ENCODE measurements at regions of chr11 and their contacts with region 1.

Region 1: DNA sequence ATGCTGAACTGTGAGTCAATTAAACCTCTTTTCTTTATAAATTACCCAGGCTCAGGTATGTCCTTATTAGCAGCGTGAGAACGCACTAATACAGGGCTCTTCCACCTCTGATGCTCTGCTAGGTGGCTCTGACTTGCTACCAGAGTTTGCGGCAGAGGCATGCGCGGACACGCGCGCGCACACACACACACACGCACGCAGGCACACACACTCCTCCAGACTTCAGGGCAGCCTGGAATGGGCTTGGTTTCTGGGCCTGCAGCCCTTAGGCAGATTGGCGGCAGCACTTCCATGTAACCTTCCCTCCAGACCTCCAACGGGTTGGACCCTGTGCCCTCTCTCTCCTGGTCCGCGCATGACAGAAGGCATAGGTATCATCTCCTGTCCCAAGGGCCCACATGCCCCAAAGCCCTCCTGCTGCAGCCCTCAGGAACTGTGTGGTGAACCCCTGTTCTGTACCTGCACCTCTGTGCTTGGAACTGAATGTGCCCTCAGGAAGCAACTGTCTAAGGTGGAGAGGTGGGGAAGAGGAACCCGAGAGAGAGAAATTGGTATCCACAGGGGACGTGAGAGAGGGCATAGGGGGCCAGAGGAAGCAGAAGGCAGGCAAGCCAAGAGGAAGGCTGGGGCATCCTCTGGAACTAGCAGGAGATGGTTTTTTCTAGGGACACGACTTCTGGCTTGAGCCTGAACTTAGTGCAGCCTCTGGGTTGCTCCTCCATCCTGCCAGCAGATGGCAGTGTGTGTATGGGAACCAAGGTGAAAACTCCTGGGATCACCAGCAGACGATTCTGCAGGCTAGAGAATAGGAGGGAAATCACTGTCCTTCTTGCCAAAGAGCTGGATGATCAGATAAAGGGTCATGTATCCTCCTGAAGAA is 23.4 kb upstream of the RIC3 start:
- DNase-seq: peak in 1 of 2 experiments; percentile 88
- H3K4me3 ChIP-seq: no peak overlapping the region
- H3K27ac ChIP-seq: no peak overlapping the region
- H3K4me1 ChIP-seq: peaks cover 0 to 3% (median 0%) of the 10 kb centered on the region in 4 experiments; a peak in 2 of 7 replicates
- H3K27me3 ChIP-seq: peaks cover 0 to 10% (median under 1%) of the 10 kb centered on the region in 4 experiments; a peak in 1 of 7 replicates
- CTCF ChIP-seq: peak; percentile 83 to 98 (median 89)
- EP300 ChIP-seq: no peak
- POLR2A ChIP-seq: no peak
- RAD21 ChIP-seq: peak; percentile 89

Region 2: DNA sequence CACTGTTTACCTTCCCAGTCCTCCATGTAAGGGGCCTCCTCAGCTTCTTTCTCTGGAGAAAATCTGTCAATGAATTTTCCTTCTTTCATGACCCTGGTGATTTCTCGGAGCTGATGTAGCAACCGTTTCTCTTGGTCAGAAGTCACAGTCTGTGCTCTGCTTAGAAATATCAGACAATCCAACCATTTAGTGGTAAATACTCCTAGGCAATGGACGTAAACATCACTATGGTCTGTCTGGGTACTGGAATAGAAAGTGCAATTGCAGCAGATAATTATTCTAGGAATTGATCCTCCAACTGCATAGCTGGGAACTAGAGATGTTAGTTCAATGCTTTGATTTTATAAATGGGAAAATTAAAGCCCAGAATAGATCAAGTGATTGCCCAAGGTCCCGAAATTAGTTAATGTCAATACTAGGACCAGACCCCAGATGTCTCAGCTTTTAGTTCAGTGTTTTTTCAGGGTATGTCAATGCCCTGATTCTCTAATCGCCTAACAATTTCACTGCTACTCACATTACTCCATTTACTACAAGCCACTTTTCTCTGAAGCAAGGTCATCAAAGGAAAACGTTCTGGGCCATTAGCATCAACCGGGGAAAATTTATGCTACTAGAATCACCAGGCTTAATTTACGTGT is 65.5 kb before region 1 on chr11:
- CTCF ChIA-PET with region 1: no interaction called
- POLR2A ChIA-PET with region 1: no interaction called
- DNase-seq: no peak
- H3K4me3 ChIP-seq: no peak overlapping the region
- H3K27ac ChIP-seq: no peak overlapping the region
- H3K4me1 ChIP-seq: no peaks in the 10 kb centered on the region
- H3K27me3 ChIP-seq: no peaks in the 10 kb centered on the region
- CTCF ChIP-seq: no peak
- EP300 ChIP-seq: no peak
- POLR2A ChIP-seq: no peak
- RAD21 ChIP-seq: no peak

Region 3: DNA sequence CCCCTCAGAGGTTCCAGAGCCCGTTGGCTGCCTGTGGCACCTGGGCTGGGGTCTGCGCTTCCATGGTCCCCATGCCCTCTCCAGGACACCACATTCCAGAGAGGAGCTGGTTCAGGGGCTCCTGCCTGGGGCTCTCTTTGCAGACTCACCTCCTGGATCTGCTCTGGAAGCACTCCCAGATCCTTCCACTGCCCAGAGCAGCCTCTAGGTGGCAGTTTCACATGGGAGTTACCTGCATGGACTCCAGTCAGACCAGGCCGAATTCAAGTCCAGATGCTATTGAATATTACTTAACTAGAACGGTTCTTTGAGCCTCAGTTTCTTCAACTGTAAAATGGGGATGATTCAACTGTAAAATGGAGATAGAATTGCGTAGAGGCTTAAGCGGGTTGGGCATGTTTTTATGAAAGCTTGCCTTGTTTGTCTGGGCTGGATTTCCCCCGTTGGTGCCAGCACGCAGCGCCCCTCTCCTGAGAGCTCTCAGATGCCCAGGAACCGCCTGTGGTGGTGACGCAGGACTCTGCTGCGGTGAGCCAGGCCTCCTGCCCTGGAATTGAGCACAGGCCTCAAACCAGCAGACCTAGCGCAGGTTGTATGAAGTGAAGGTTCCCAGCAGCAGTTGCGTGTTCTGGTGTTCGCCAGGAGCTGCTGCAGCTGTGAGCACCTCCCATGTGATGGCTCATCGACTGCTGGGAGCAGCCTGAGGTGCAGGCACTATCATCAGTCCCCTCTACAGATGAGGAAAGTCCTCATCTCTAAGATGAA is 27.2 kb after region 1 on chr11:
- CTCF ChIA-PET with region 1: interaction called, 342 read pairs
- POLR2A ChIA-PET with region 1: no interaction called
- DNase-seq: peak in 1 of 2 experiments; percentile 73
- H3K4me3 ChIP-seq: no peak overlapping the region
- H3K27ac ChIP-seq: no peak overlapping the region
- H3K4me1 ChIP-seq: peaks cover 0 to 2% (median 0%) of the 10 kb centered on the region in 4 experiments; a peak in 1 of 7 replicates
- H3K27me3 ChIP-seq: no peaks in the 10 kb centered on the region; a peak in 1 of 7 replicates
- CTCF ChIP-seq: peak; percentile 70 to 78 (median 73)
- EP300 ChIP-seq: no peak
- POLR2A ChIP-seq: no peak
- RAD21 ChIP-seq: peak; percentile 42 to 64

Region 4: GRCh38 chr11:8247312-8247711 is 55.1 kb after region 1 on chr11:
- CTCF ChIA-PET with region 1: interaction called, 11 read pairs
- POLR2A ChIA-PET with region 1: no interaction called
- DNase-seq: peak in 1 of 2 experiments; percentile 75
- H3K4me3 ChIP-seq: no peak overlapping the region
- H3K27ac ChIP-seq: no peak overlapping the region
- H3K4me1 ChIP-seq: peaks cover 7 to 16% (median 11%) of the 10 kb centered on the region in 4 experiments; a peak in 6 of 7 replicates
- H3K27me3 ChIP-seq: peaks cover 0 to 1% (median 0%) of the 10 kb centered on the region in 4 experiments; a peak in 1 of 7 replicates
- CTCF ChIP-seq: peak; percentile 65 to 77 (median 71)
- EP300 ChIP-seq: no peak
- POLR2A ChIP-seq: no peak
- RAD21 ChIP-seq: peak; percentile 64 to 68

Region 5: DNA sequence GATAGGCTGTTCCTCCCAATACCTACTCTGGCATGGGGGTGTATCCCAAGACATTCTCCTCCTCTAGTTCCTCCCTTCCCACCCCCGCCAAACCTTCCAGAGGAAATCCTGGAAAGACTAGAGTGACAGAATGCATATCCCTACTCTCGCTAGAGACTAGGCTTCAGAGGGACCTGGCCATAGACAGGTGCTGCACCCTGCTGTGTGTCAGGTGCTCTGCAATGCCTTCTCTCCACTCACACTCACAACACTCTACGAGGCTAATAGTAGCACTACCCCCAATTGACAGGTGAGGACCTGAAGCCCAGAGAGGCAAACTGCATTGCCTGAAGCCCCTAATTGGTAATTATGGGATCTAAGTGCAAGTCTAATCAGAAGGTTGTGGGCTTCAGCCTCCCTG is 117.6 kb after region 1 on chr11:
- CTCF ChIA-PET with region 1: interaction called, 10 read pairs
- POLR2A ChIA-PET with region 1: no interaction called
- DNase-seq: no peak
- H3K4me3 ChIP-seq: no peak overlapping the region
- H3K27ac ChIP-seq: no peak overlapping the region
- H3K4me1 ChIP-seq: peaks cover 0 to 11% (median 3%) of the 10 kb centered on the region in 4 experiments; a peak in 2 of 7 replicates
- H3K27me3 ChIP-seq: no peaks in the 10 kb centered on the region; a peak in 1 of 7 replicates
- CTCF ChIP-seq: peak in 1 of 3 experiments; percentile 28; a peak in 2 of 4 replicates
- EP300 ChIP-seq: no peak
- POLR2A ChIP-seq: no peak
- RAD21 ChIP-seq: peak; percentile 28 to 44